T-cell (primary cell): ENCODE measurements at regions of chr10 and their contacts with region 1.

Region 1: DNA sequence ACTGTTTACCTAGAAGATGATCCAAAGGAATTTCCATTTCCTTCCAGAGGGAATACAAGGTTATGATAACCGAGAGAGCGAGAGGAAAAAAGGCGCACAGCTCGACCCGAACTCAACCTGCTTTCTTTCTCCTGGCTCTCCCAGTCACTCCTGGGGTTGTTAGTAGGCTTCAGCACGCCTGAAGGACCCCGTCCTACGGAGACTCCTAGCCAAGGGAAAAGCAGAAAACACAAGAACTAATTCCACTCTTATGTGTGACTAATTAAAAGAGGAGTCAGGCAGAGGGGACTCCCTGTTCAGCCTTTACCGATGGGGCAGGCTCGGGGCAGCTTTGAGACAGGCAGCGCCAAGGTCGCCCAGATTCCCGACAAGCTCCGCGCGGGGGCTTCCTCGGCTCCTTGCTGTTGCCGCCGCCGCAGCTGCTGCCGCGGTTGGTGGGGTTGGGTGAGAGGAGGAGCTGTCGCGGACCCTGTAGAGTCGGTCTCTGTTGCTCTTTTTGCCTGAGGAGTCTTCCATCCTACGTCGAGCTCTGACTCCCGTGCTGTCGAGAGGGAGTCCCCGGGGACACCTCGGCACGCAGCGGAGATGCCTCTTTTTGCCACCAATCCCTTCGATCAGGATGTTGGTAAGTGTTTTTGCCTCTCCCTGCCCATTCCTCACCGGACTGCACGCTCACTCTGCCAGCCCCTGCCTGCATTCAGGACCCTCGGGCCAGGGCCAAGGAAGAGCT is at the start of gene STAM:
- DNase-seq: peak; percentile 85 to 95 (median 92)
- ATAC-seq: peak; percentile 92
- H3K4me3 ChIP-seq: peak within 1 kb of the TSS; percentile 93 to 97
- H3K4me3 Mint-ChIP-seq: peak within 1 kb of the TSS; percentile 94 to 99 (median 99)
- H3K27ac ChIP-seq: peak within 1 kb of the TSS; percentile 99
- H3K27ac Mint-ChIP-seq: peak within 1 kb of the TSS; percentile 100
- H3K4me1 ChIP-seq: peaks cover 27 to 28% of the 10 kb centered on the region in 2 experiments
- H3K4me1 Mint-ChIP-seq: peaks cover 49 to 59% (median 55%) of the 10 kb centered on the region in 3 donors
- H3K27me3 ChIP-seq: no peaks in the 10 kb centered on the region
- H3K27me3 Mint-ChIP-seq: no peaks in the 10 kb centered on the region
- total RNA-seq, gene STAM: 18.6 to 42.7 (median 25.7) TPM

Region 2: DNA sequence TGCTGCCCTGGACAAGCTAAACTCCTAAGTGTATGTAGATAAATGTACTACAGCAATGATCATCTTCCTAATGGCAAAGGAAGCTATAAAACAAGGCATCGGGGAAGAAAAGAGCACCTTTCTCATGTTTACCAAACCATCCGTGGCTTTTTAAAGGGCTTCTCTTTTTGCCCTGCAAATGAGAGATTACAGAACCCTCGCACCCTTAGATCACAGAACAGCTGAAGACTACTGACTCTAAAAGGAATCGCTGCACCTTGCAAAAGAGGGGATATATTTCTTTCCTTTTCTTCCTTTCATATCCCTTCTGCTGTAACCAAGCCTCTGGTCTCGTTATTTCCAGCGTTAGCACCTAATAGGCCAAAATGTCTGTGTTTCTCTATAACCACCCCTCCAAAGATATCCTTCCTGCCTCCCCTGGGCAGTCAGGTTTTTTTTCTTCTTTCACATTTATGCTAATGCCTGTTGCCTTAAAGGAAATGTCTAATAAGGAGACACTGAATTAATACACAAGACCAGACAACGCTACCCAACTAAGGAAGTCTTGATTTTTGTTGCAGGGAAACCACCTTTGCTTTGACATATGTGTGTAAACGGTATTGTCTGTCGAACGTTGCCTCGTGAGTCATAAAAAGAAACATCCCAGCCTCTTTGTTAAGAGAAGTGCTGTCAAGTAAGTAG is 200.1 kb before region 1 on chr10:
- CTCF ChIA-PET with region 1: no interaction called
- POLR2A ChIA-PET with region 1: no interaction called
- DNase-seq: peak in 1 of 35 experiments; percentile 64
- ATAC-seq: peak; percentile 52 to 95 (median 80)
- H3K4me3 ChIP-seq: no peak overlapping the region
- H3K4me3 Mint-ChIP-seq: peak overlapping the region in 2 of 3 donors; percentile 29 to 51
- H3K27ac ChIP-seq: no peak overlapping the region
- H3K27ac Mint-ChIP-seq: peak overlapping the region; percentile 29 to 57
- H3K4me1 ChIP-seq: peaks cover 0 to 5% of the 10 kb centered on the region in 2 experiments
- H3K4me1 Mint-ChIP-seq: peaks cover 13 to 14% (median 14%) of the 10 kb centered on the region in 3 donors
- H3K27me3 ChIP-seq: peaks cover 0 to 3% of the 10 kb centered on the region in 2 experiments
- H3K27me3 Mint-ChIP-seq: peaks cover 6 to 8% of the 10 kb centered on the region in 2 donors

Region 3: DNA sequence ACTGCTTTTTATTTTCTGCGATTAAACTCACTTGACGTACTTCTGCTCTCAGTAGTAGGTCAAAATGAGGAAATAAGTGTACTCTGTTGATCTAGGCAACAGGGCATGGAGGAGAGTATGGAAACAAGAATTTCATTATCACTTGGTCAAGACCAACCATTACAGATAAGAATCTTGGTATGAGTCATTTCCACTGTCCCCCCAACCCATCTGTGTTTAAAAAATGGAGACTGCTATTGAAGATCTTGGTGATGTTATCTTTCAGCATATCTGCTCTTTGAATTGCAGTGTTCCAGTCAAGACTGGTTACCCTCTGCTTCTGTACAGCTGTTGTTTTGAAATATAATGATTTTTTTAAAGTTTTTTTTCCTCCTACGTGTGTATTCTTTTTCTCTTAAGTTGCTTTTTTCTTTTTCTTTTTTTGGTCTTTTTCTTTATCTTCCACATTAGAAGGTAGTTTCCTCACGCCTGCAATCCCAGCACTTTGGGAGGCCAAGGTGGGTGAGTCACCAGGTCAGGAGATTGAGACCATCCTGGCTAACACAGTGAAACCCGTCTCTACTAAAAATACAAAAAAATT is 11.7 kb after region 1 on chr10:
- CTCF ChIA-PET with region 1: interaction called, 3 read pairs
- POLR2A ChIA-PET with region 1: interaction called, 3 to 13 read pairs
- DNase-seq: peak in 1 of 35 experiments; percentile 19
- ATAC-seq: peak; percentile 19 to 57 (median 53)
- H3K4me3 ChIP-seq: no peak overlapping the region
- H3K4me3 Mint-ChIP-seq: peak overlapping the region; percentile 27 to 37 (median 28)
- H3K27ac ChIP-seq: peak overlapping the region; percentile 53
- H3K27ac Mint-ChIP-seq: peak overlapping the region; percentile 6 to 77
- H3K4me1 ChIP-seq: peaks cover 6 to 10% of the 10 kb centered on the region in 2 experiments
- H3K4me1 Mint-ChIP-seq: peaks cover 70 to 78% (median 75%) of the 10 kb centered on the region in 3 donors
- H3K27me3 ChIP-seq: no peaks in the 10 kb centered on the region
- H3K27me3 Mint-ChIP-seq: no peaks in the 10 kb centered on the region